ENCODE measurements at regions of chr5 and their contacts with region 1.

Region 1: GRCh38 chr5:68379275-68380036 is 163.9 kb downstream of the PIK3R1 start:
- DNase-seq: peak in 1 of 2 donors; percentile 52
- ATAC-seq: peak; percentile 81
- H3K4me3 ChIP-seq: no peak overlapping the region
- H3K27ac ChIP-seq: no peak overlapping the region
- H3K4me1 ChIP-seq: peaks cover 6 to 7% of the 10 kb centered on the region in 2 donors
- H3K27me3 ChIP-seq: no peaks in the 10 kb centered on the region

Region 2: GRCh38 chr5:68285851-68286611 is 93.4 kb before region 1 on chr5:
- intact Hi-C with region 1: no loop called
- DNase-seq: no peak
- ATAC-seq: no peak
- H3K4me3 ChIP-seq: no peak overlapping the region
- H3K27ac ChIP-seq: no peak overlapping the region
- H3K4me1 ChIP-seq: peaks cover 2 to 3% of the 10 kb centered on the region in 2 donors
- H3K27me3 ChIP-seq: no peaks in the 10 kb centered on the region

Region 3: GRCh38 chr5:68433923-68434879 is 54.7 kb after region 1 on chr5:
- intact Hi-C with region 1: loop called in 1 of 2 experiments (anchors 5 kb)
- DNase-seq: peak; percentile 93 to 94
- ATAC-seq: peak; percentile 92
- H3K4me3 ChIP-seq: no peak overlapping the region
- H3K27ac ChIP-seq: peak overlapping the region in 1 of 2 donors; percentile 95
- H3K4me1 ChIP-seq: no peaks in the 10 kb centered on the region
- H3K27me3 ChIP-seq: no peaks in the 10 kb centered on the region

Region 4: DNA sequence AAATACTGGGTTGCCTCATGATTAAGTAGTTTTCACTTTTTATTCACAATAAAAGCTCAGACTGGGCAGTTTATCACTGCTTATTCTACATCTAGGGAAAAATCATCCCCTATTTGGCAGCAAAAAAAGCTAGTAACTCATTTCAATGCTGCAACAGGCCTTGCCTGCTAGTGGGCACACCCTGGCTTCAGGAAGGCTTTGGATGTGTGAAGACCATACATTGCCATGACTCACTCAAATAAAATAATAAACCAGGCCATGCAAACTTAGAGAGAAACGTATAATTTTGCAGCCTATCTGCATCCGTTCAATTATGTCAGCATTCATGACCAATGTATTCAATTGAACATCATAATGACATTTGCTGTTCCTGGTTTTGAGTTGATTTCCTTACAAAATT is 239.0 kb after region 1 on chr5:
- intact Hi-C with region 1: no loop called
- DNase-seq: no peak
- ATAC-seq: no peak
- H3K4me3 ChIP-seq: no peak overlapping the region
- H3K27ac ChIP-seq: no peak overlapping the region
- H3K4me1 ChIP-seq: no peaks in the 10 kb centered on the region
- H3K27me3 ChIP-seq: no peaks in the 10 kb centered on the region